ENCODE measurements at regions of chr16 and their contacts with region 1.

Region 1: GRCh38 chr16:29848420-29849297 is 14.4 kb downstream of the CDIPT start:
- DNase-seq: peak; percentile 79 to 83 (median 80)
- H3K4me3 ChIP-seq: no peak overlapping the region
- H3K4me3 Mint-ChIP-seq: no peak overlapping the region
- H3K27ac ChIP-seq: no peak overlapping the region
- H3K27ac Mint-ChIP-seq: peak overlapping the region; percentile 13 to 89 (median 60)
- H3K4me1 ChIP-seq: peaks cover 6% of the 10 kb centered on the region
- H3K4me1 Mint-ChIP-seq: peaks cover 1 to 7% (median 4%) of the 10 kb centered on the region in 4 donors
- H3K27me3 ChIP-seq: no peaks in the 10 kb centered on the region
- H3K27me3 Mint-ChIP-seq: no peaks in the 10 kb centered on the region

Region 2: GRCh38 chr16:29694384-29695195 is 154.1 kb before region 1 on chr16:
- CTCF ChIA-PET with region 1: interaction called, 134 read pairs
- POLR2A ChIA-PET with region 1: interaction called, 54 read pairs
- intact Hi-C with region 1: loop called (anchors 2 kb)
- DNase-seq: no peak
- H3K4me3 ChIP-seq: no peak overlapping the region
- H3K4me3 Mint-ChIP-seq: no peak overlapping the region
- H3K27ac ChIP-seq: no peak overlapping the region
- H3K27ac Mint-ChIP-seq: no peak overlapping the region
- H3K4me1 ChIP-seq: peaks cover 5% of the 10 kb centered on the region
- H3K4me1 Mint-ChIP-seq: peaks cover 4 to 10% (median 6%) of the 10 kb centered on the region in 4 donors
- H3K27me3 ChIP-seq: no peaks in the 10 kb centered on the region
- H3K27me3 Mint-ChIP-seq: no peaks in the 10 kb centered on the region

Region 3: DNA sequence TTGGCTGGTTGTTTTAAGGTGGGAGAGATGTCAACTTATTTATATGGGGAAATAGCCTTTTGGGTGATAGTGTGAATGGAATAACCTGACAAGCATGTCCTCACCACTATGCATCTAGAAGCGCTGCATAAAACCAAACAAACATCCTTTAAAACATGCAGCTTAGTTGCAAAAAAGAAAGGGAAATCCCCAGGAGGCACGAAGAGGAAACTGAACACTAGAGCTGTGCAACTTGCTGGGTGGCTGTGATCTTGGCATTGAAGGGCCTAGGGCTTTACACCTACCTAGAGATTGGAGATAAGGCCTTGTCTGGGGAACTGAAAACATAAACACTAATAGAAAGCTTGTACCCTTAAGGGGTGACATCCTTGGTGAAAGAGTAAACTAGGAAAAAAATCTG is 110.1 kb before region 1 on chr16:
- CTCF ChIA-PET with region 1: interaction called, 11 read pairs
- POLR2A ChIA-PET with region 1: interaction called, 9 read pairs
- intact Hi-C with region 1: no loop called
- DNase-seq: peak; percentile 80 to 87 (median 84)
- H3K4me3 ChIP-seq: no peak overlapping the region
- H3K4me3 Mint-ChIP-seq: peak overlapping the region; percentile 3 to 73 (median 68)
- H3K27ac ChIP-seq: peak overlapping the region; percentile 62
- H3K27ac Mint-ChIP-seq: peak overlapping the region; percentile 90 to 100 (median 94)
- H3K4me1 ChIP-seq: peaks cover 81% of the 10 kb centered on the region
- H3K4me1 Mint-ChIP-seq: peaks cover 63 to 91% (median 74%) of the 10 kb centered on the region in 4 donors
- H3K27me3 ChIP-seq: no peaks in the 10 kb centered on the region
- H3K27me3 Mint-ChIP-seq: no peaks in the 10 kb centered on the region

Region 4: GRCh38 chr16:29790183-29790952 is 58.3 kb before region 1 on chr16 and contains the start of gene KIF22:
- CTCF ChIA-PET with region 1: interaction called, 22 read pairs
- POLR2A ChIA-PET with region 1: interaction called, 19 read pairs
- intact Hi-C with region 1: loop called (anchors 1 kb)
- DNase-seq: peak; percentile 99 to 100 (median 100)
- H3K4me3 ChIP-seq: peak within 1 kb of the TSS; percentile 90 to 98
- H3K4me3 Mint-ChIP-seq: peak within 1 kb of the TSS; percentile 97 to 100 (median 99)
- H3K27ac ChIP-seq: peak within 1 kb of the TSS; percentile 80
- H3K27ac Mint-ChIP-seq: peak within 1 kb of the TSS; percentile 96 to 99 (median 98)
- H3K4me1 ChIP-seq: peaks cover 43% of the 10 kb centered on the region
- H3K4me1 Mint-ChIP-seq: peaks cover 27 to 58% (median 43%) of the 10 kb centered on the region in 4 donors
- H3K27me3 ChIP-seq: no peaks in the 10 kb centered on the region
- H3K27me3 Mint-ChIP-seq: no peaks in the 10 kb centered on the region
- total RNA-seq, gene KIF22: 89.4 to 98.6 TPM

Region 5: GRCh38 chr16:29825145-29826044 is 23.3 kb before region 1 on chr16:
- CTCF ChIA-PET with region 1: interaction called, 129 read pairs
- POLR2A ChIA-PET with region 1: interaction called, 41 read pairs
- intact Hi-C with region 1: loop called (anchors 1 kb)
- DNase-seq: peak; percentile 26 to 57 (median 29)
- H3K4me3 ChIP-seq: peak overlapping the region in 1 of 2 donors; percentile 25
- H3K4me3 Mint-ChIP-seq: peak overlapping the region; percentile 63 to 89 (median 81)
- H3K27ac ChIP-seq: peak overlapping the region; percentile 3
- H3K27ac Mint-ChIP-seq: peak overlapping the region; percentile 80 to 95 (median 90)
- H3K4me1 ChIP-seq: peaks cover 92% of the 10 kb centered on the region
- H3K4me1 Mint-ChIP-seq: peaks cover 24 to 92% (median 55%) of the 10 kb centered on the region in 4 donors
- H3K27me3 ChIP-seq: no peaks in the 10 kb centered on the region
- H3K27me3 Mint-ChIP-seq: no peaks in the 10 kb centered on the region

Region 6: DNA sequence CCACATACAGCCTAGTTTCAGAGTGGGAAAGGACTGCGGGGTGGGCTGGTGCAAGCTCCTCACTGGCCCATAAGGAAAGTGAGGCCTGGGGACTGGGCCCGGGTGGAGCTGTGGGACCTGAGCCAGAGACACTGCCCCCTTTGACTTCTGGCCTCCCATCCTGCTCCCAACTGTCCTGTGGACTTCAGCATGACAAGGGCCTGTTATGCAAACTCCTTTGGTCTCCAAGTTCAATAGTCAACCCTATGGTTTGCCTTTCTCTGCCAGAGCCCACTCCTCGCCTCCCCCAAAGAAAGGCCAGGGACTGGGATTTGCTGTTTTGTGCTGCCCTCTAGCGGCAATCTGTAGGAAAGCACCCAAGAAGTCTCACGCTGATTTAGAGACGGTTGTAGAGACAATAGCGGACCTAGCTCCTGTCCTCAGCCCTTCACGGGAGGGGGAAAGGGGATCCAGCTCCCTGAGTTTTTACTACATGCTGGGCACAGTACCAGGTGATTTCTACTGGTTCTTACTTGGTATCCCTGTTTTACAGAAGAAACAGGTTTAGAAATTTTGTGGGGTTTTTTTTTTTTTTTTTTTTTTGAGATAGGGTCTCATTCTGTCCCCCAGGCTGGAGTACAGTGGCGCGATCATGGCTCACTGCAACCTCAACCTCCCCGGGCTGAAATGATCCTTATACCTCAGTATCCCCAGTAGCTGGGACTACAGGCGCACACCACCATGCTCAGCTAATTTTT is 183.6 kb after region 1 on chr16:
- CTCF ChIA-PET with region 1: interaction called, 10 read pairs
- POLR2A ChIA-PET with region 1: no interaction called
- intact Hi-C with region 1: no loop called
- DNase-seq: peak; percentile 61 to 70 (median 66)
- H3K4me3 ChIP-seq: no peak overlapping the region
- H3K4me3 Mint-ChIP-seq: peak overlapping the region in 5 of 8 donors; percentile 35 to 76 (median 43)
- H3K27ac ChIP-seq: no peak overlapping the region
- H3K27ac Mint-ChIP-seq: peak overlapping the region in 1 of 7 donors; percentile 48
- H3K4me1 ChIP-seq: peaks cover 5% of the 10 kb centered on the region
- H3K4me1 Mint-ChIP-seq: peaks cover 4 to 18% (median 4%) of the 10 kb centered on the region in 4 donors
- H3K27me3 ChIP-seq: peaks cover 18% of the 10 kb centered on the region
- H3K27me3 Mint-ChIP-seq: peaks cover 26 to 37% of the 10 kb centered on the region in 2 donors

Region 7: DNA sequence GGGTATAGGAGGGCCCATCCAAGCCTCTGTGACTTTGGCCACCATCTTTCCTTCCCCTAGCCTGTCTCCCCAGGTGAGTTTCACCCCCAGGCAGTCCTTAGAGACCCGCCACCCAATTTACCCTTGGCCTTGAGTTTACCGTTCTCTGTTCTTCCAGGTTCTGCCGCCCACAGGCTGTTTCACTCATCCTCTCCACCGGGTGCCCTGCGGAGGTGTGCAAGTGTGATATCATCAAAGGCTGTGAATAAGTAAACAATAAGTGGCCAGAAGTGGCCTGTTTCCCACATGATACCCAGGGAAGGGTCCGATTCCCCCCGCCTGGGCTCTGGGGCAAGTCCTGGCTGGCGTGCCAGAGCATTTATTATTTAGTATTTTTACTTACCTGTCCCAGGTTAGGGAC is 197.5 kb after region 1 on chr16:
- CTCF ChIA-PET with region 1: no interaction called
- POLR2A ChIA-PET with region 1: no interaction called
- intact Hi-C with region 1: no loop called
- DNase-seq: no peak
- H3K4me3 ChIP-seq: no peak overlapping the region
- H3K4me3 Mint-ChIP-seq: no peak overlapping the region
- H3K27ac ChIP-seq: no peak overlapping the region
- H3K27ac Mint-ChIP-seq: no peak overlapping the region
- H3K4me1 ChIP-seq: no peaks in the 10 kb centered on the region
- H3K4me1 Mint-ChIP-seq: peaks cover 0 to 5% (median 4%) of the 10 kb centered on the region in 4 donors
- H3K27me3 ChIP-seq: no peaks in the 10 kb centered on the region
- H3K27me3 Mint-ChIP-seq: peaks cover 0 to 2% of the 10 kb centered on the region in 2 donors

Region 8: GRCh38 chr16:30091474-30092372 is 243.1 kb after region 1 on chr16 and contains the start of gene TBX6:
- CTCF ChIA-PET with region 1: no interaction called
- POLR2A ChIA-PET with region 1: no interaction called
- intact Hi-C with region 1: no loop called
- DNase-seq: peak; percentile 90 to 93 (median 91)
- H3K4me3 ChIP-seq: peak within 1 kb of the TSS in 1 of 2 donors; percentile 72
- H3K4me3 Mint-ChIP-seq: peak within 1 kb of the TSS; percentile 87 to 95 (median 90)
- H3K27ac ChIP-seq: peak within 1 kb of the TSS; percentile 75
- H3K27ac Mint-ChIP-seq: peak within 1 kb of the TSS; percentile 84 to 98 (median 95)
- H3K4me1 ChIP-seq: peaks cover 60% of the 10 kb centered on the region
- H3K4me1 Mint-ChIP-seq: peaks cover 27 to 65% (median 42%) of the 10 kb centered on the region in 4 donors
- H3K27me3 ChIP-seq: no peaks in the 10 kb centered on the region
- H3K27me3 Mint-ChIP-seq: no peaks in the 10 kb centered on the region
- total RNA-seq, gene TBX6: 1.3 to 1.4 TPM

Measured in CD4-positive, alpha-beta memory T cell (primary cell).